Activated CD8-positive, alpha-beta T cell treated with anti-CD3 and anti-CD28 coated beads, Interleukin-2, amount 10 ng/mL, durations not matched to agents 7 days and 5 days (primary cell): ENCODE measurements at regions of chr21 and their contacts with region 1.

Region 1: GRCh38 chr21:41816220-41817165 is 49.6 kb upstream of the RIPK4 start:
- DNase-seq: peak; percentile 70
- ATAC-seq: peak; percentile 86
- H3K4me3 Mint-ChIP-seq: no peak overlapping the region
- H3K27ac Mint-ChIP-seq: no peak overlapping the region
- H3K4me1 Mint-ChIP-seq: no peaks in the 10 kb centered on the region
- H3K27me3 Mint-ChIP-seq: no peaks in the 10 kb centered on the region

Region 2: GRCh38 chr21:41916888-41917433 is 100.5 kb after region 1 on chr21:
- CTCF ChIA-PET with region 1: interaction called, 12 read pairs
- POLR2A ChIA-PET with region 1: no interaction called
- DNase-seq: no peak
- ATAC-seq: no peak
- H3K4me3 Mint-ChIP-seq: no peak overlapping the region
- H3K27ac Mint-ChIP-seq: no peak overlapping the region
- H3K4me1 Mint-ChIP-seq: no peaks in the 10 kb centered on the region
- H3K27me3 Mint-ChIP-seq: no peaks in the 10 kb centered on the region